Astrocyte of the cerebellum (primary cell): ENCODE measurements at regions of chr11 and their contacts with region 1.

Region 1: GRCh38 chr11:59668950-59669610 is at the start of gene PATL1:
- DNase-seq: peak; percentile 96
- H3K4me3 ChIP-seq: peak within 1 kb of the TSS; percentile 92
- CTCF ChIP-seq: no peak

Region 2: DNA sequence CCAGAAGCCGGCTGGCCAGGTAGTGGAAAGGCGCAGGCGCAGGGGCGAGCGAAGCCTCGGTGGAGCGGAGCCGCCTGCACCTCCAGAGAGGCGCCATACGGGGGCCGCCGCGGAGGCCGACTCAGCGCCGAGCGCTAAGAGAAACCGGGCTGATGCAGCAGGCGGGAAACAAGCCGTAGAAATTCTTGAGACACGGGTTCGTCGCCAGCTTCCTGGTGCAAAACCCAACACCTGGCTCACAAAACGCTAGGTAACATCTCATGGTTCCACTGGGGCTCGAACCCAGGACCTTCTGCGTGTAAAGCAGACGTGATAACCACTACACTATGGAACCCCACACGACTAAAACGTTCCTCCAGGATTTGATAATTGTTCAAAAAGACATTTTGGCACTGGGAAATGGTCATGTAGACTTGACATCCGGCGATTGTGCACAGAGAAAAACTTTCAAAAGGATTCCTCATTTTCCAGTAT is 118.7 kb before region 1 on chr11:
- in situ Hi-C with region 1: loop called (anchors 5 kb)
- DNase-seq: peak; percentile 89
- H3K4me3 ChIP-seq: peak overlapping the region; percentile 57
- CTCF ChIP-seq: peak; percentile 47

Region 3: DNA sequence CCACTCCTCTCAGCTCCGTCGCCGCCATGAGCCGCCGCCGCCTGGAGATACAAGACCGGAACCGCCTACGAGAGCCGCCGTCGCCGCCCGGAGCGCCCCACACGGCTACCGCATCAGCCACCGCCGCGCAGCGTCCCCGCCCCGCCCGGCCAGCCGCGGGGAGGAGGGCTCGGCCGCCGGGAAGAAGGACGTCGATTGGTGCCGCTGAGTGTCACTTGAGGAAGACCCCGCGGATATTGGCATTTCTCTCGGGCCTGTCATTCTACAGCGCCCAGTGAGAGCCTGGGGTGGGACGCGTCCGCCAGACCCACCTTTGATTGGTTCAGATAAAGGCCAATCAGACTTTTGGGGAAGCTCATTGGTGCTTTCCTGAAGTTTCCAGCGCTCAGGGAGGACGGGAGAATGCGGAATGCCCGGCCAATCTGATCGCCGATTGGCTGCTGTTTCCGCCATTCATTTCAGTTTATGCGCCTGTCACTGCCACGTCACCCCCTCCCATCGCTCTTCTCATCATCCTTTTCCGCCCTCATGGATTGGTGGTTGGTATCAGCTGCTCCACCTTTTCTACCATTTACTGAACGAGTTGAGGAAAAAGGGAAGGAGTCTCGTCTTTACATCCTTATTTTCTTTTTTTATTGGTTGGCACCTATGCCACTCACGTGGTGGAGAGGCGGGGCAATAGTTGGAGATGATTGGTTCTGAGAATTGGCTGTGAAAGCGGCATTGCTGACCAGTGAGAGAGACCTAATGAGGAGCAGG is 53.3 kb before region 1 on chr11 and contains the start of gene OSBP:
- in situ Hi-C with region 1: no loop called
- DNase-seq: peak; percentile 100
- H3K4me3 ChIP-seq: peak within 1 kb of the TSS; percentile 82
- CTCF ChIP-seq: no peak

Region 4: DNA sequence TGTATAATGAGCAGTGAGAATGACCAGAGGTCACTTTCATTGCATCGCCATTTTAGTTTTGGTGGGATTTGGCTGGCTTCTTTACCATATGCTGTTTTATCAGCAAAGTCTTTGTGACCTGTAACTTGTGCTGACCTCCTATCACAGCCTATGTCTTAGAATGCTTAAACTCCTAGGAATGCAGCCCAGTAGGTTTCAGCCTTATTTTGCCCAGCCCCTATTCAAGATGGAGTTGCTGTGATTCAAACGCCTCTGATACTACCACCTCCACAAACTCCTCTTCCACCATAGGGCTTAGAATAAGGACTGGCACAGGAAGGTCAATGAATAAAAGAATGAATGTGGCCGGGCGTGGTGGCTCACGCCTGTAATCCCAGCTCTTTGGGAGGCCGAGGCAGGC is 64.6 kb after region 1 on chr11:
- in situ Hi-C with region 1: no loop called
- DNase-seq: no peak
- H3K4me3 ChIP-seq: no peak overlapping the region
- CTCF ChIP-seq: no peak